Prostate gland (tissue), 2 donors: ENCODE measurements at regions of chr9 and their contacts with region 1.

Region 1: GRCh38 chr9:23447166-23447565 is 378.9 kb downstream of the ELAVL2 start:
- DNase-seq: no peak
- H3K4me3 ChIP-seq: no peak overlapping the region
- H3K27ac ChIP-seq: no peak overlapping the region
- H3K4me1 ChIP-seq: no peaks in the 10 kb centered on the region
- H3K27me3 ChIP-seq: no peaks in the 10 kb centered on the region
- CTCF ChIP-seq: no peak
- POLR2A ChIP-seq: no peak

Region 2: DNA sequence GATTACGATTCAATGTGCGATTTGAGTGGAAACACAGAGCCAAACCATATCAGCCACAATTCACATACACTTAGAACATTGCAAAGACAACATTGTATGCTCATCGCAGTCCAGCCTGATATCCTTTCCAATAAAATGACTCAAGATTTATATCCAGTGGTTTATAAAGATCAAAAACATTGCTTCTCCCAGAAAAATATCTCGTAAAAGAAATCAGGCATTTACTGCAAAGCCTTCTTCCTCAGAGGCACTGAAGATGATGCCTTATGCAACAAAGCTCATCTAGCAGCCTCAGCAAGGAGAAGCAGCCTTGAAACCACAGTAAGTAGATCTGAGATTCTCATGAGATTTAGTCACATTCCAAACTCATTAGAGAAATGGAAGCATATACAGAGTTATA is 144.9 kb before region 1 on chr9:
- intact Hi-C with region 1: no loop called
- DNase-seq: no peak
- H3K4me3 ChIP-seq: no peak overlapping the region
- H3K27ac ChIP-seq: no peak overlapping the region
- H3K4me1 ChIP-seq: no peaks in the 10 kb centered on the region
- H3K27me3 ChIP-seq: no peaks in the 10 kb centered on the region
- CTCF ChIP-seq: no peak
- POLR2A ChIP-seq: no peak

Region 3: GRCh38 chr9:23502004-23502403 is 54.8 kb after region 1 on chr9:
- intact Hi-C with region 1: loop called (anchors 10 kb)
- DNase-seq: no peak
- H3K4me3 ChIP-seq: no peak overlapping the region
- H3K27ac ChIP-seq: no peak overlapping the region
- H3K4me1 ChIP-seq: no peaks in the 10 kb centered on the region
- H3K27me3 ChIP-seq: no peaks in the 10 kb centered on the region
- CTCF ChIP-seq: no peak
- POLR2A ChIP-seq: no peak

Region 4: GRCh38 chr9:23648651-23649050 is 201.5 kb after region 1 on chr9:
- intact Hi-C with region 1: no loop called
- DNase-seq: no peak
- H3K4me3 ChIP-seq: no peak overlapping the region
- H3K27ac ChIP-seq: no peak overlapping the region
- H3K4me1 ChIP-seq: no peaks in the 10 kb centered on the region
- H3K27me3 ChIP-seq: no peaks in the 10 kb centered on the region
- CTCF ChIP-seq: no peak
- POLR2A ChIP-seq: no peak